ENCODE measurements at regions of chr12 and their contacts with region 1.

Region 1: GRCh38 chr12:103548622-103549601 is 38.2 kb upstream of the STAB2 start:
- DNase-seq: peak; percentile 28 to 71 (median 60)
- ATAC-seq: peak; percentile 74
- H3K4me3 ChIP-seq: no peak overlapping the region
- H3K4me3 Mint-ChIP-seq: no peak overlapping the region
- H3K27ac ChIP-seq: no peak overlapping the region
- H3K27ac Mint-ChIP-seq: no peak overlapping the region
- H3K4me1 ChIP-seq: no peaks in the 10 kb centered on the region
- H3K4me1 Mint-ChIP-seq: peaks cover 0 to 5% (median 0%) of the 10 kb centered on the region in 7 donors
- H3K27me3 ChIP-seq: no peaks in the 10 kb centered on the region
- H3K27me3 Mint-ChIP-seq: peaks cover 11 to 35% (median 20%) of the 10 kb centered on the region in 5 donors

Region 2: DNA sequence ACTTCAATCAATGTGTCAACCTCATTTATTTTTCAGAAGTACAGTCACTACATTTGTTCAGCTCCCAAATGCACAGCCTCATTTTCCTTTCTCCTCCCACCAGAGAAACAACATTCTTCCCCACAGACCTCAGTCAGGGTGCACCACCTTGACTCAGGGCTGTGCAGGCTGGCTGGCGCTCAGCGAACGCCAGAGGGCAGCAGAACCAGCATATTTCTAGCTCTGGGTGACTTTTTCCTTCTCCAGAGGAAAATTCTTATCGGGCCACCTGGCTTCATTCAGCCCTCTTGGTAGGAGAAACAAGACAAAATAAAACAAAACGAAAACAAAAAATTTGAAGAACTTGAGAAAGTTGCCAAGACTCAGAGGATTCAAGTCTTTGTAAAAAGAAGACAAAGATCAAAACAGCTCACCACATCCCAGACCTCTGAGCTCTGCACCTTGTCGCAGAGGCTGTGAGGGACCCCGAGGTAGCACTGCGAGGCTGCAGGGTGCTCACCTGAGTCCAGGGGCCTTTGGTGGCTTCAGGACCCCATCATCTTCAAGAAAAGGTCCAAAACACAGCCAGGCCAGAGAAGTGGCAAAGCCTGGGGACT is 665.6 kb before region 1 on chr12:
- CTCF ChIA-PET with region 1: interaction called, 26 read pairs
- POLR2A ChIA-PET with region 1: no interaction called
- intact Hi-C with region 1: loop called in 1 of 2 experiments (anchors 1 kb)
- DNase-seq: peak in 6 of 9 donors; percentile 10 to 33 (median 18)
- ATAC-seq: peak; percentile 48
- H3K4me3 ChIP-seq: no peak overlapping the region
- H3K4me3 Mint-ChIP-seq: no peak overlapping the region
- H3K27ac ChIP-seq: no peak overlapping the region
- H3K27ac Mint-ChIP-seq: no peak overlapping the region
- H3K4me1 ChIP-seq: no peaks in the 10 kb centered on the region
- H3K4me1 Mint-ChIP-seq: peaks cover 0 to 5% (median 0%) of the 10 kb centered on the region in 7 donors
- H3K27me3 ChIP-seq: no peaks in the 10 kb centered on the region
- H3K27me3 Mint-ChIP-seq: peaks cover 0 to 26% (median 19%) of the 10 kb centered on the region in 5 donors

Region 3: GRCh38 chr12:103301642-103302591 is 247.0 kb before region 1 on chr12:
- CTCF ChIA-PET with region 1: no interaction called
- POLR2A ChIA-PET with region 1: no interaction called
- intact Hi-C with region 1: no loop called
- DNase-seq: no peak
- ATAC-seq: no peak
- H3K4me3 ChIP-seq: no peak overlapping the region
- H3K4me3 Mint-ChIP-seq: no peak overlapping the region
- H3K27ac ChIP-seq: no peak overlapping the region
- H3K27ac Mint-ChIP-seq: no peak overlapping the region
- H3K4me1 ChIP-seq: no peaks in the 10 kb centered on the region
- H3K4me1 Mint-ChIP-seq: no peaks in the 10 kb centered on the region
- H3K27me3 ChIP-seq: no peaks in the 10 kb centered on the region
- H3K27me3 Mint-ChIP-seq: peaks cover 0 to 9% (median 5%) of the 10 kb centered on the region in 5 donors

Region 4: DNA sequence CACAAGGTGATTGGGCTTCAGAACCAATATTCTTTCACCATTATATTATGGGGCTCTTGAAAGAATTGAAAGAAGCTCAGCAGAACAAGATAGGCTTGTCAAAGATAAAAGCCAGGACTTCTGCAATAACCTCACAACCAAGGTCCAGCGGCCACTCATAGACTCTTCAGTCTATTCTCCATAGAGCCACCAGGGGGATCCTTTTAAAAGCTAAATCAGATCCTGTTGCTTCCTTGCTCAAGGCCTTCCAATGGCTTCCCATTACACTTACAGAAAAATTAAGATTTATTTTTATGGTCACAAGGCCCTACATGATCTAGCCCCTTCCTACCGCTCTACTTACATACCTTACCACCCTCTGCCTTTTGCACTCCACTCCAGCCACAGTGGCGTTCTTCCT is 222.7 kb before region 1 on chr12:
- CTCF ChIA-PET with region 1: no interaction called
- POLR2A ChIA-PET with region 1: no interaction called
- intact Hi-C with region 1: loop called in 1 of 2 experiments (anchors 1 kb)
- DNase-seq: no peak
- ATAC-seq: no peak
- H3K4me3 ChIP-seq: no peak overlapping the region
- H3K4me3 Mint-ChIP-seq: no peak overlapping the region
- H3K27ac ChIP-seq: no peak overlapping the region
- H3K27ac Mint-ChIP-seq: no peak overlapping the region
- H3K4me1 ChIP-seq: no peaks in the 10 kb centered on the region
- H3K4me1 Mint-ChIP-seq: no peaks in the 10 kb centered on the region
- H3K27me3 ChIP-seq: no peaks in the 10 kb centered on the region
- H3K27me3 Mint-ChIP-seq: peaks cover 0 to 2% (median 0%) of the 10 kb centered on the region in 5 donors

Region 5: DNA sequence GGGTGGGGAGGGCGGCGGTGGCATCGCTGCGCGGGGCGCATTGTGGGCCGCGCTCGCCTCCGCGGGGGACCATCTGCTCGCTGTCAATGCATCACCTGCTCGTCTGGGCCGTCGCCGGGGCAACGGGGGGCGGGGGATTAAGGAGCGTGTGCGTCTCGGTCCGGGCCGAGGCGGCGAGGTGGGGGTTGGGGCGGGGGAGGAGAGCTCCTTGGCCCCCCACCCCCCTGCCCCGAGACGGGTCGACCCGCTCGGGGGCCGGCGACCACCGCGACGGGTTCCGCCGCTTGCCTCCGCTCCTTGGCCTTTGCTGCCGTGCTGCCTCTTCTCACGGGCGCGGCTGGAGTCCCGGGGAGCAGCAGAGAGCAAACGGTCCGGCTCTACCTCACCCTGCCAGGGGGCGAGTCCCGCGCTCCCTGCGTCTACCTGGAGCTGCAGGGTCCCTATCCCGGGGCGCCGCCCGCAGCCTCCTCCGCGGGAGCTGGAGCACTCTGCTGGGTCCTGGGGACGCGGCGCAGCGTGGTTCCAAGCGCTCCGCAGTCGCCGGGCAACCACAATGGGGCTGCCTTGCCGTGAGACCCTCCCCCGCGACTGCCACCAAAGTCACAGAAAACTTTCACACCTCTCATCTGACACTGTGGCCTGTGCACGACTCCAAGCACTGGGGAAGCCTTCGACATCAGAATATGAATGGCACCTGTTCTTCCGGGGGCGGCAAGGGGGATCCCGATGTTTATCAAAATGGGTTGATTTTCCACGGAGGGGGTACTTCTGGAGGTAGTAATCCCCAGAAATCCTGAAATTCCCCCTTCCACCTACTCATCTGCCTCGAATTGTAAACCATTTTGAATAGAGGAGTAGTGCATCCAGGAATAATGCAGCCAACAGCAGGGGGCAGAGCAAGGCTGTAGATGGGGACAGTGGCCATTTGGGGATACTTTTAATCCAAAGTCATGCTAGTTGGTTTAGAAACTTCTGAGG is 53.1 kb before region 1 on chr12 and contains the start of gene C12orf42:
- CTCF ChIA-PET with region 1: interaction called, 4 read pairs
- POLR2A ChIA-PET with region 1: no interaction called
- intact Hi-C with region 1: loop called (anchors 1 to 2 kb)
- DNase-seq: peak; percentile 39 to 63 (median 59)
- ATAC-seq: peak; percentile 83
- H3K4me3 ChIP-seq: peak within 1 kb of the TSS; percentile 48
- H3K4me3 Mint-ChIP-seq: peak within 1 kb of the TSS; percentile 80 to 91 (median 85)
- H3K27ac ChIP-seq: peak within 1 kb of the TSS; percentile 63
- H3K27ac Mint-ChIP-seq: peak within 1 kb of the TSS; percentile 57 to 91 (median 86)
- H3K4me1 ChIP-seq: no peaks in the 10 kb centered on the region
- H3K4me1 Mint-ChIP-seq: peaks cover 8 to 24% (median 21%) of the 10 kb centered on the region in 7 donors
- H3K27me3 ChIP-seq: no peaks in the 10 kb centered on the region
- H3K27me3 Mint-ChIP-seq: peaks cover 20 to 44% (median 32%) of the 10 kb centered on the region in 5 donors
- total RNA-seq, gene C12orf42: 2.6 to 15.4 (median 8.9) TPM